Transverse colon (tissue), 4 donors: ENCODE measurements at regions of chr11 and their contacts with region 1.

Region 1: GRCh38 chr11:69909561-69910496 is 90.6 kb upstream of the FGF3 start:
- DNase-seq: no peak
- H3K4me3 ChIP-seq: no peak overlapping the region
- H3K27ac ChIP-seq: no peak overlapping the region
- H3K4me1 ChIP-seq: peaks cover 0 to 21% (median 9%) of the 10 kb centered on the region in 4 donors
- H3K27me3 ChIP-seq: peaks cover 24% of the 10 kb centered on the region
- CTCF ChIP-seq: peak in 4 of 5 experiments; percentile 29 to 60 (median 44)
- EP300 ChIP-seq: no peak
- POLR2A ChIP-seq: no peak

Region 2: GRCh38 chr11:69683764-69684333 is 226.0 kb before region 1 on chr11:
- in situ Hi-C with region 1: loop called in 1 of 4 experiments (anchors 10 kb)
- intact Hi-C with region 1: no loop called
- DNase-seq: peak; percentile 27
- H3K4me3 ChIP-seq: no peak overlapping the region
- H3K27ac ChIP-seq: no peak overlapping the region
- H3K4me1 ChIP-seq: peaks cover 0 to 5% (median 2%) of the 10 kb centered on the region in 4 donors
- H3K27me3 ChIP-seq: peaks cover 9% of the 10 kb centered on the region
- CTCF ChIP-seq: peak in 4 of 5 experiments; percentile 29 to 55 (median 36)
- EP300 ChIP-seq: no peak
- POLR2A ChIP-seq: no peak

Region 3: DNA sequence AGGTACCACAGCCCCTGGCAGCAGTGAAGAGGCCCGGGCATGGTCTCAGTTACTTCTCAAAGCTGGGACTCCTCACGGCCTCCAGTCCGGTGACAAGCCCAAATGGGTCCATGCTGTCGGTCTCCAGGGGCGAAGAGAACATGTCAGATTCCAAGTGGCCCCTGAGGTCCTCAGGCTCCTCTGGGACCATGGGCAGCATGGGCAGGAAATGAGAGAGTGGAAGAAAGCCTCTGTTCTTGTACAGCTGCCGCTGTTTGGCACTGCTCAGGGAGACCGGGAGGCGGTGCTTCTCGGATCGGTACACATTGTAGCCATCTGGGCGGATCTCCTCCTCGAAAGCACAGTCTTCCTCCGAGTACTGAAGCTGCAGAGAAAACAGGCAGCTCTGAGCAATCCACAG is 210.6 kb before region 1 on chr11:
- in situ Hi-C with region 1: loop called in 1 of 4 experiments (anchors 10 kb)
- intact Hi-C with region 1: no loop called
- DNase-seq: no peak
- H3K4me3 ChIP-seq: no peak overlapping the region
- H3K27ac ChIP-seq: no peak overlapping the region
- H3K4me1 ChIP-seq: peaks cover 4 to 11% (median 6%) of the 10 kb centered on the region in 4 donors
- H3K27me3 ChIP-seq: peaks cover 91% of the 10 kb centered on the region
- CTCF ChIP-seq: no peak
- EP300 ChIP-seq: no peak
- POLR2A ChIP-seq: no peak

Region 4: DNA sequence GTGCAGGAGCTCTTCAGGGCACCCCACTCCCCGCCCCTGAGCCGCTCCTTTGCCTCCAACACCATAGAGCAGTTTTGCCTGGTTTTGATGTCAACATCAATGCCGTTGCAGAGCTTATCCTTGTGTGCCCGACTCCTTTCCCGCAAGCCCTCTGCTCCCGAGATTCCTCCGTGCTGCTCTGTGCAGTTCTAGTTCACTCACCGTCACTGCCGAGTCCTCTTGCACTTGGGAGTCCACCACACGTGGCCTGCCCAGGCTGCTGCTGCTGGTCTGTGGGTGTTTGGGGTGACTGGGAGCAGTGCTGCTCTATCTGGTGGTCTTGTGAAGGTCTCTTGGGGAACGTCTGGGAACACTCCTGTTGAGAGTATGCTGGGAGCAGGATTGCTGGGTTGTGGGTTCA is 104.5 kb after region 1 on chr11:
- in situ Hi-C with region 1: no loop called
- intact Hi-C with region 1: no loop called
- DNase-seq: no peak
- H3K4me3 ChIP-seq: no peak overlapping the region
- H3K27ac ChIP-seq: no peak overlapping the region
- H3K4me1 ChIP-seq: no peaks in the 10 kb centered on the region
- H3K27me3 ChIP-seq: no peaks in the 10 kb centered on the region
- CTCF ChIP-seq: no peak
- EP300 ChIP-seq: no peak
- POLR2A ChIP-seq: no peak